ENCODE measurements at regions of chr1 and their contacts with region 1.

Region 1: GRCh38 chr1:246566128-246566812 is at the starts of genes CNST and TFB2M:
- DNase-seq: peak; percentile 99
- H3K4me3 ChIP-seq: peak within 1 kb of the TSS; percentile 79 to 91 (median 90)
- H3K27ac ChIP-seq: peak within 1 kb of the TSS; percentile 79
- H3K4me1 ChIP-seq: peaks cover 46% of the 10 kb centered on the region
- H3K27me3 ChIP-seq: no peaks in the 10 kb centered on the region
- CTCF ChIP-seq: no peak
- POLR2A ChIP-seq: peak; percentile 73
- total RNA-seq, gene CNST: 18.1 and 21.5 TPM in 2 replicates
- total RNA-seq, gene TFB2M: 14.3 and 14.8 TPM in 2 replicates

Region 2: DNA sequence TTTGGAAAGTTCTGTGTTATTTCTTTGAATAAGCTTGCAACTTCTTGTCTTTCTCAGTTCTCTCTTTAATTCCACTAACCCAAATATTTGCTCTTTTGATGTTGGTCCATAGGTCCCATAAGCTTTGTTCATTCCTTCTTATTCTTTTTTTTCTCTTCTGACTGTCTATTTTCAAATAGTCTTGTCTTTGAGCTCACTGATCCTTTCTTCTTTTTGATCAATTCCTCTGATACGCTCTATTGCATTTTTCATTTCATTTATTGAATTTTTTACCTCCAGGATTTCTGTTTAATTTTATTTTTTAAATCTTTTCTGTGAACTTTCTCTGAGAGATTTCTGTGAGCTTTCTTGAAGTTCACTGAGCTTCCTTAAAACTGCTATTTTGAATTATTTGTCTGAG is 924.9 kb before region 1 on chr1:
- CTCF ChIA-PET with region 1: no interaction called
- POLR2A ChIA-PET with region 1: no interaction called
- dilution Hi-C with region 1: no loop called
- intact Hi-C with region 1: no loop called
- DNase-seq: no peak
- H3K4me3 ChIP-seq: no peak overlapping the region
- H3K27ac ChIP-seq: no peak overlapping the region
- H3K4me1 ChIP-seq: no peaks in the 10 kb centered on the region
- H3K27me3 ChIP-seq: no peaks in the 10 kb centered on the region
- CTCF ChIP-seq: no peak
- POLR2A ChIP-seq: no peak

Region 3: DNA sequence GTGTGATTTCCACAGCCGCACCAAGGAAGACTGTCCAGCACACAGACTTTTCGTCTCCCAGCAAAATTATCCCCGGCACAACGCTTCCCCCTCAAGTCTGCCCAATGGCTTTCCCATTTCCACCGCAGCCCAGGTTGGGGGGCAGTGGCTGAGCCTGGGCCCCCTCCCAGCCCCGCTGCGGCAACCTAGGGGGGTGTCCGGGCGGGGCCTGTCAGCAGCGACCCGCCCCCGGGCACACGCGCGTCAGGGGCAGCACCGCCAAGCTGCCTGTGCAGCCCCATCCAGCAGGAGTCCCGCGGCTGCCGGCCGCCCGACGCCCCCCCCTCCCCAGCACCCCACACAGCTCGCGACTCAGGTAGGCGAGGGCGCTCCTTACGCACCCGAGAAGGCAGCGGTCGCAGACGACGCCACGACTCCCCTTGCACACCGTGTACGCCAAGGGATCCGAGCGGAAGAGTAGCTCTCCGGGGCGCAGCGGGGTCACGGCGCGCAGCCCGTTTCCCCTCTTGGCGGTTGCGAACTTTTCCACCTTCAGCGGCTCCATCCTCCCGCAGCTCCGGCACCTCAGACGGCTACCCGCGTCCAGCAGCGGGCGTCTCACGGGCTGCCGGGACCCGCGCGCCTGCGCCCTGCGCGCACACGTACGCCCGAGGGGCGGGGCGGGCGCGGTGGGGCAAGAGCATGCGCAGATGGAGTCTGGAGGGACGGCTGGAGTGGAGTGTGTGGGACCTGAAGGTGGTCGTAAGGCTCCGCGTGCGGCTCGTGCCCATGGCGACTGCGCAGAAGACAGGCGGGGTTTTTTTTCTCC is 59.4 kb before region 1 on chr1 and contains the start of gene SMYD3:
- CTCF ChIA-PET with region 1: no interaction called
- POLR2A ChIA-PET with region 1: no interaction called
- dilution Hi-C with region 1: no loop called
- intact Hi-C with region 1: loop called (anchors 2 kb)
- DNase-seq: peak; percentile 90
- H3K4me3 ChIP-seq: peak within 1 kb of the TSS; percentile 35 to 80 (median 45)
- H3K27ac ChIP-seq: no peak within 1 kb of the TSS
- H3K4me1 ChIP-seq: peaks cover 14% of the 10 kb centered on the region
- H3K27me3 ChIP-seq: no peaks in the 10 kb centered on the region
- CTCF ChIP-seq: peak in 1 of 2 donors; percentile 9
- POLR2A ChIP-seq: peak; percentile 69
- total RNA-seq, gene SMYD3: 27.6 and 32.1 TPM in 2 replicates

Region 4: GRCh38 chr1:246608616-246609376 is 42.5 kb after region 1 on chr1:
- CTCF ChIA-PET with region 1: interaction called, 9 read pairs
- POLR2A ChIA-PET with region 1: interaction called, 5 read pairs
- dilution Hi-C with region 1: no loop called
- intact Hi-C with region 1: loop called (anchors 1 kb)
- DNase-seq: peak; percentile 99
- H3K4me3 ChIP-seq: no peak overlapping the region
- H3K27ac ChIP-seq: peak overlapping the region; percentile 91
- H3K4me1 ChIP-seq: peaks cover 20% of the 10 kb centered on the region
- H3K27me3 ChIP-seq: no peaks in the 10 kb centered on the region
- CTCF ChIP-seq: peak in 1 of 2 donors; percentile 37
- POLR2A ChIP-seq: peak; percentile 27

Region 5: GRCh38 chr1:246689409-246690008 is 123.2 kb after region 1 on chr1:
- CTCF ChIA-PET with region 1: interaction called, 14 read pairs
- POLR2A ChIA-PET with region 1: no interaction called
- dilution Hi-C with region 1: no loop called
- intact Hi-C with region 1: loop called (anchors 1 kb)
- DNase-seq: peak; percentile 71
- H3K4me3 ChIP-seq: peak overlapping the region in 1 of 3 experiments; percentile 5
- H3K27ac ChIP-seq: no peak overlapping the region
- H3K4me1 ChIP-seq: no peaks in the 10 kb centered on the region
- H3K27me3 ChIP-seq: no peaks in the 10 kb centered on the region
- CTCF ChIP-seq: peak; percentile 75 to 81
- POLR2A ChIP-seq: no peak

Region 6: DNA sequence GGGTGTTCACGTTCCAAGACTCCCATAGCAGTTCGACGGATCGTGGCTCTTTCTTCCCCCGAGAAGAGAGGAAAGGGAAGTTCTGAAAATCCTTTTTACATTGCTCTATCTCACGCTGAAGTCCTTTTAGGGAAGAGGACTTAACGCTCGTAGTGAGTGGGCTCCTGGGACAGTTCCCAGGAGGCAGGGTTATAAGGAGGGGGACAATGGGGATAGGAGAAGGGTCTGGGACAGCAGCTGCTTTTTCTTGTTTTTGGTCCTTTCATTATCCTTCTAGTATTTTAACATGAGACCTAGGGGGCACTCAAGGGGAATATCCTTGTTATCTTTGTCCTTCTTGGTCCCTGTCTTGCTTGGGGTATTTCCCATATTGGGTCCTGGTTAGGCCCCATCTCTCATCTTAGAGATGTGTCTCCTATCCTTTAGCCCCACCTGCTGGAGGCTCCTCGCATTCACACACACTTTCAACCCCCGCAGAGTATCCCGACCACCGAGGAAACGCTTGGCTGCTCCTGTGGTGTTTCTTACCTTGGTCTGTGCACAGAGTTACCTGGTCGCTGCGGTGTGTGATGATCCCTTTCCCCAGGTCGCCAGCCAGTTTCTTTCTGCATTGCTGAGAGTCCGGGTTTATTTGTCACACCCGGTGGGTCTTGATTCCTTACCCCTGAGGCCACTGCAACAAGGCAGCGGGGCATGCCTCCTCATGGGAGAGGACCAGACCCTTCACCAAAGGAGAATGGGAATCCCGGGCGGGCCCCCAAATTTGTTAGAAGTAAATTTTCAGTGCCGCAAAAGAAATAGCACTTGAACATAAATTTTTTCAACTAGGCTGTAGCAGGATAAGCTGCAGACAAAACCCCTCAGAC is 187.6 kb after region 1 on chr1:
- CTCF ChIA-PET with region 1: interaction called, 5 read pairs
- POLR2A ChIA-PET with region 1: no interaction called
- dilution Hi-C with region 1: no loop called
- intact Hi-C with region 1: loop called (anchors 5 kb)
- DNase-seq: peak; percentile 60
- H3K4me3 ChIP-seq: no peak overlapping the region
- H3K27ac ChIP-seq: no peak overlapping the region
- H3K4me1 ChIP-seq: no peaks in the 10 kb centered on the region
- H3K27me3 ChIP-seq: no peaks in the 10 kb centered on the region
- CTCF ChIP-seq: peak; percentile 74 to 80
- POLR2A ChIP-seq: no peak

Region 7: DNA sequence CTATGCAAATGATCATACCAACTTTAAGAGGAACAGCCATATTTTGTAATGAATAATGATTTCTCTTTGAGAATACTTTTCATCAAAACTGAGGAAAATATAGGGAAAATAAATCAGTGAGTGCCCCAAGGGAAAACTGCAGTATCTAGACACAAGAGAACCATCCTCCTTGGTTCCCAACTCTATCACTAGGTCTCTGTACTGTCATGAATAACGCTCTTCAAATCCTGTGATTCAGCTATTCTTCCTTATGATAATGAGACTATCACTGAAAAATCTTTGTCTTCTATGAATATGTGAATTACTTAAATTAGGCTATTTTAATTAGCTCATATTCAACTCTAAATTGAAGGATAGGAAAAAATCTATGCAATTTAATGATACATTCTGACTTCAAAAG is 1449.5 kb after region 1 on chr1:
- CTCF ChIA-PET with region 1: no interaction called
- POLR2A ChIA-PET with region 1: no interaction called
- dilution Hi-C with region 1: no loop called
- intact Hi-C with region 1: no loop called
- DNase-seq: no peak
- H3K4me3 ChIP-seq: no peak overlapping the region
- H3K27ac ChIP-seq: no peak overlapping the region
- H3K4me1 ChIP-seq: no peaks in the 10 kb centered on the region
- H3K27me3 ChIP-seq: no peaks in the 10 kb centered on the region
- CTCF ChIP-seq: no peak
- POLR2A ChIP-seq: no peak

Measured in endothelial cell of umbilical vein (primary cell).